ENCODE measurements at regions of chr3 and their contacts with region 1.

Region 1: DNA sequence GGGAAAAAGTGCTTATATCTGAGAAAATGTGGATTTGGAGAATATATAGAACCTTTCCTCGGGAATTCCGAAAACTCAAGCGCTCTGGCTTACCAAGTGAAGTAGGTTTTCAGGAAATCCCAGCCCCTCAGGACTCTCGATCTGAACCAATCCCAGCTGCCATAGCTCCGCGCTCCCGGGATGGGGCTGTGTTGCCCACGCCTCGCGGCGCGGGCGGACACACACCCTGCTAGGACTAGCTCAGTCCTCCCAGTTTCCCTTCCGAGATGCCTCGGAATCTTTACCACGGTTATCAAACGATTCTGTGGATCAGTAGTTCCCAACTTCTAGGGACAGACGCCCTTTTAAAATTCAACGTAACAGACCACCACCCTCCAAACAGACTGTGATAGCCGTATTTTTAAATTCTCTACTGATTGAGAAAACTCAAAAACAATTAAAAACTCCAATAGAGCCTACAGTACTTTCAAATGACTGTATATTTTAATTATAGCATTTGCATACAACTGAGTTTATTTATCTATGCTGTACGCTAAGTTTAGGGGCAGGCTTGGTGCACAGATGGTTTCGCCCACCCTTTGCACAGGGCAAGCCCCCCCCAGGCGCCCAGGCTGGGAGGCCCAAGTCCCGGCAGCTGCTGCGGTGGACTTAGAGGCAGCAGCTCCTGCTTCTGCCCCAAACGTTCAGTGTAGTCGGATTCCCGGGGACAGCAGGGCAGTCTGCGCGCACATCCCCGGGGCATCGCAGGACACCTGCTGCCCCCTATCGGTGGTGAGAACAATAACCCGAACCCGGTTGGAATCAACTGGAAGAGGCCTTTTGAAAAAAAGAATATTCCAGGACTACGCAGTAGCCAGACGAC is 52.3 kb downstream of the CCDC54 start:
- DNase-seq: peak; percentile 74
- H3K4me3 ChIP-seq: peak overlapping the region; percentile 19
- H3K27ac ChIP-seq: no peak overlapping the region
- H3K4me1 ChIP-seq: peaks cover 71% of the 10 kb centered on the region
- CTCF ChIP-seq: peak; percentile 88

Region 2: GRCh38 chr3:107032111-107032510 is 397.4 kb before region 1 on chr3:
- CTCF ChIA-PET with region 1: no interaction called
- POLR2A ChIA-PET with region 1: no interaction called
- intact Hi-C with region 1: no loop called
- DNase-seq: no peak
- H3K4me3 ChIP-seq: no peak overlapping the region
- H3K27ac ChIP-seq: no peak overlapping the region
- H3K4me1 ChIP-seq: no peaks in the 10 kb centered on the region
- CTCF ChIP-seq: no peak

Region 3: GRCh38 chr3:107271787-107272387 is 157.7 kb before region 1 on chr3:
- CTCF ChIA-PET with region 1: interaction called, 3 read pairs
- POLR2A ChIA-PET with region 1: interaction called, 4 read pairs
- intact Hi-C with region 1: loop called (anchors 1 kb)
- DNase-seq: peak; percentile 66
- H3K4me3 ChIP-seq: no peak overlapping the region
- H3K27ac ChIP-seq: no peak overlapping the region
- H3K4me1 ChIP-seq: no peaks in the 10 kb centered on the region
- CTCF ChIP-seq: peak; percentile 92

Region 4: DNA sequence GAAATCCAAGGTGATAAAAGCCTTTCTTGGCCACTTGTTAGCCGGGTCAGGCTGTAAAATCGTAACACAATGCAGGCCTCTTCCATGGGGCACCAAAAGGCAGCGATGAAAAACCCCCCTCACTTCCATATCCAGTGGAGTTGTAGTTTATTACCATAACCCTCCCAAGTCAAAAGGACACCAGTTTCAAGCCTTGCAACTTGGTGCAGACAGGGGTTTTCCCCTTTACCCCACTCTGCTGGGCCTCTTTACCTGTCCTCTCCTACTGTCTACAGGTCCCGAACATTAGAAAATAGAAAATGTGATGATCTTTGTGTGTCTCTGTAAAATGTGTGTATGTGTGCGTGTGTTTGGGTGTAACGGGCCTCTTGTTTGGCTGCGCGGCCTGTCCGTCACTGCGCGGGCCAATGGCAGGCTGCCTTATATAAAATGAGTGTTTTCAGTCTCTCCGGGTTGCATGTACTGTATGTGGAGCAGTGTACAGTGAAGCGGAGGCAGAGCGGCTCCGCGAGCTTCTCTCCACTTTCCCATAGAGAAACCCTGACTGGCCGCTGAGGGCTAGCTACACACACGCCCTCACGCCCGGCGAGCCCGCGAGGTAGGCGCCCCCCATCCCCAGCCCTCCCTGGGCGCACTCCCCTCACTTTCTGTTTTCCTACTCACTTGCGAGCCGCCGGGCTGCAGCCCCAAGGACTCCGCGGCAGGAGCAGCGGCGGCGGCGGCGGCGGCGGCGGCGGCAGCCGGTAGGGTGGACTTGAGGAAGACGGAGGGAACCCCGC is 93.1 kb after region 1 on chr3 and contains the start of gene BBX:
- CTCF ChIA-PET with region 1: interaction called, 4 read pairs
- POLR2A ChIA-PET with region 1: interaction called, 7 read pairs
- intact Hi-C with region 1: loop called (anchors 1 kb)
- DNase-seq: peak; percentile 92
- H3K4me3 ChIP-seq: peak within 1 kb of the TSS; percentile 89
- H3K27ac ChIP-seq: peak within 1 kb of the TSS; percentile 82
- H3K4me1 ChIP-seq: peaks cover 40% of the 10 kb centered on the region
- CTCF ChIP-seq: no peak
- total RNA-seq, gene BBX: 20.2 and 27.0 TPM in 2 replicates

Region 5: GRCh38 chr3:107555359-107555758 is 125.8 kb after region 1 on chr3:
- CTCF ChIA-PET with region 1: no interaction called
- POLR2A ChIA-PET with region 1: no interaction called
- intact Hi-C with region 1: no loop called
- DNase-seq: no peak
- H3K4me3 ChIP-seq: no peak overlapping the region
- H3K27ac ChIP-seq: no peak overlapping the region
- H3K4me1 ChIP-seq: no peaks in the 10 kb centered on the region
- CTCF ChIP-seq: no peak

Region 6: DNA sequence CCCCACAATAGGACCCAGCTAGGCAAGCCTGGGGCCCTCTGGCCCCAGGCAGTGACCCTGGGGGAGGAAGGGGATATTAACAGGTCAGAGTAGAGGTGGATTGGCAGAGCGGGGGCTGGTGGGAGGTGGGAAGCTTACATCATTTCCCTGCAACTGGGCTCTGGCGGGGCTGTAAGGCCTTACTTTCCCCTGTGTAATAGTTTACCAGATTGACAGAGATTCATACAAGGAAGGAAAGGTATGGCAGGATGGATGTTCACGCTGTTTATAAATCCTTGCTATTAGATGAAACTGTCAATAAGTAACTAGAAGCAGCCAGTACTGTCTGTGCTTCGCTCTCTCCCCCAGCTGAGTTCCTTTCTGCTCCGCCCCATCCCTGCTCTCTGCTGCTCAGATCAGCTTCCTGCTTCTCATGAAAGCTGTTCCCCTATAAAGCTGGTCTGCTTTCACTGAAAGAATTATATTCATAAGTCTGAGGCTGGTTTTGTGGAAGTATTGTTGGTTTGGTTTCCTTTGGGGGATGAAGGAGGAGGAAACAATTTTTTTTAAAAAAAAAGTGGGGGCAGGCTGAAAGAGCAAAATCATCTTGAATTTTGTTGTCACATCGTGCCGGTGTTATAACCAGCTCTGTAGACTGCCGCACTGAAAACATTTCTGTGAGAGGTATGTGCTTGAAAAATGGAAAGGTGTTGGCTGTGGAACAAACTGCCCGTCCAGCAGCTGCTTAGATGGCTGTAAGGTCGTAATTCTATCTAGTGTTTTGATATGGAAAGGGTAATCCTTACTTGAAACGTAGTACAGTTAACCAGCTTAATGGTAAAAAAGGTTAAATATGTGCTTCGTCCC is 169.6 kb after region 1 on chr3:
- CTCF ChIA-PET with region 1: no interaction called
- POLR2A ChIA-PET with region 1: interaction called, 3 read pairs
- intact Hi-C with region 1: loop called (anchors 2 kb)
- DNase-seq: peak; percentile 68
- H3K4me3 ChIP-seq: peak overlapping the region; percentile 65
- H3K27ac ChIP-seq: peak overlapping the region; percentile 49
- H3K4me1 ChIP-seq: peaks cover 43% of the 10 kb centered on the region
- CTCF ChIP-seq: no peak